Left lung (tissue), 14 donors: ENCODE measurements at regions of chr16 and their contacts with region 1.

Region 1: GRCh38 chr16:84726079-84726668 is 26.4 kb downstream of the USP10 start:
- DNase-seq: peak; percentile 77 to 96 (median 89)
- ATAC-seq: peak; percentile 90
- H3K4me3 ChIP-seq: peak overlapping the region in 1 of 2 donors; percentile 32
- H3K27ac ChIP-seq: peak overlapping the region in 1 of 2 donors; percentile 80
- H3K4me1 ChIP-seq: peaks cover 33 to 77% of the 10 kb centered on the region in 2 donors
- H3K27me3 ChIP-seq: no peaks in the 10 kb centered on the region
- CTCF ChIP-seq: peak; percentile 94 to 96

Region 2: DNA sequence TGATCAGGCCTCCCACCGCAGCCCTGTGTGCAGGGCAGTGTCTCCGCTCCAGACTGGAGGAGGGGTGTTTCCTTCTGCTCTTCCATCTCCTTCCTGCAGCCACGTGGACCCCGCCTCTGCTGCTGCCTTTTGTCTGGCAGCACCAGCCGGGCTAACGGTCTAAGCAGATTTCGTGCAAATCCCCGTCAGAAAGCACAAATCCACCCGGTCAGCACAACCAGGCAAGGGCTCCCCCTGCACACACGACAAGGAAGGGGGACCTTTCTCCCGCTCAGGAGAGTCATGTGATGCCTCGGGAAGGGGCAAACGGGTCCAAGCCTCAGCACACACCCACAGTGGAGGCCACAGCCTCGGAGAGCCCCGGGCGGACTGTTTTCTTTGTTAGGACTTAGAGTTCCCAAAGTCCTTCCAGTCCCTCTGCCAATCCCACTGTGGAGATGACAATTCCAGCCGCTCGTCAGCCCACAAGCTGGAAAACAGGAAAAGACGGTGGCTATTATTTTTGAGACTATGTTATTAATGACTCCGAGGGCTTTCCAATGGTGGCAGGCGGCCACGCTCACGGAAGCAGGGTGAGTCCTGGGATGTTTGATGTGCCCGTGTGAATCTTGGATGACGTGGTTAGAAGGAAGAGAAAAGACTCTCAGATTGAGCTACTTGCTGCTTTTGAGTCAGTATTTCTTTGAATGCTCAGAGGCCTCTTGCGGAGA is 199.2 kb before region 1 on chr16:
- intact Hi-C with region 1: loop called in 1 of 2 experiments (anchors 10 kb)
- DNase-seq: peak in 2 of 4 donors; percentile 40 to 65
- ATAC-seq: peak; percentile 29
- H3K4me3 ChIP-seq: no peak overlapping the region
- H3K27ac ChIP-seq: peak overlapping the region; percentile 53 to 69
- H3K4me1 ChIP-seq: peaks cover 5 to 33% of the 10 kb centered on the region in 2 donors
- H3K27me3 ChIP-seq: no peaks in the 10 kb centered on the region
- CTCF ChIP-seq: no peak

Region 3: DNA sequence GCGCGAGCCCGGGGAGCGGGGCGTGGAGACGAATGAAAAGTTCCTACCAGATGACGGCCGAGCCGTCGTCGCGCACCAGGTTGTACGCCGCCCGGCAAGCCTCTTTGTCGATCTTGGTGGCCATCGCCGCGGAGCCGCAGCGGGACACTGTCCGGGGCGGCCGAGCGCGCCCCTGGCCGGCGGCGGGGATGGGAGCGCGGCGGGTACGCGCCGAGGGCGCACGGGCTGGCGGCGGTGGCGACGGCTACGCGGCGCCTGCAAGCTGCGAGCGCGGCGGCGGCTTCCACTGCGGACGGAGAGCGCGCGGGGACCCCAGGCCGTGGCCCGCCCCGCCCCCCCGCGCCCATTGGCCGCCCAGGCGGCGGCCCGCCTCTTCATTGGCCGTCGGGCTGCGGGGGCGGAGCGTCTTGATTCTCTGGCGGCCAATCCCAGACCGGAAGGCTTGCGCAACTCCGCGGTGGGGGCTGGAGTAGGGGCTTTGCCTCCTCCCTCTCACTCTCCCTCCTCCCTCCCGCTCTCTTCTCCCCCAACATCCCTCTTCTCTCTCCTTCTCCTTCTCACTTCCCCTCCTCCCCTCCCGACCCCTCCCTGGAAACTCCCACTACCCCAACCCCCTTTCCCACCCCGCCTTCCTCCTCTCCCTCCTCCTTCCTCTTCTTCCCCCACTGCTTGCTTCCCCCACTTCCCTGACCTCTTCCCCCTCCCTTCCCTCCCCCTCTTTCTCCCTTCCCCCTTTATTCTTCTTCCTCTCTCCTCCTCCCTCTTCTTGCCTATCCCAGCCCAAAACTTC is 108.2 kb before region 1 on chr16 and contains the start of gene COTL1:
- intact Hi-C with region 1: loop called in 1 of 2 experiments (anchors 5 kb)
- DNase-seq: peak; percentile 95 to 98 (median 97)
- ATAC-seq: peak; percentile 87
- H3K4me3 ChIP-seq: peak within 1 kb of the TSS; percentile 78 to 90
- H3K27ac ChIP-seq: peak within 1 kb of the TSS; percentile 53 to 90
- H3K4me1 ChIP-seq: peaks cover 5 to 64% of the 10 kb centered on the region in 2 donors
- H3K27me3 ChIP-seq: peaks cover 0 to 9% of the 10 kb centered on the region in 2 donors
- CTCF ChIP-seq: no peak
- polyA plus RNA-seq, gene COTL1: 109 to 146 (median 119) TPM

Region 4: GRCh38 chr16:84672276-84673202 is 53.6 kb before region 1 on chr16:
- intact Hi-C with region 1: loop called in 1 of 2 experiments (anchors 10 kb)
- DNase-seq: peak in 3 of 4 donors; percentile 71 to 97 (median 83)
- ATAC-seq: peak; percentile 98
- H3K4me3 ChIP-seq: no peak overlapping the region
- H3K27ac ChIP-seq: no peak overlapping the region
- H3K4me1 ChIP-seq: no peaks in the 10 kb centered on the region
- H3K27me3 ChIP-seq: no peaks in the 10 kb centered on the region
- CTCF ChIP-seq: peak; percentile 92 to 93

Region 5: DNA sequence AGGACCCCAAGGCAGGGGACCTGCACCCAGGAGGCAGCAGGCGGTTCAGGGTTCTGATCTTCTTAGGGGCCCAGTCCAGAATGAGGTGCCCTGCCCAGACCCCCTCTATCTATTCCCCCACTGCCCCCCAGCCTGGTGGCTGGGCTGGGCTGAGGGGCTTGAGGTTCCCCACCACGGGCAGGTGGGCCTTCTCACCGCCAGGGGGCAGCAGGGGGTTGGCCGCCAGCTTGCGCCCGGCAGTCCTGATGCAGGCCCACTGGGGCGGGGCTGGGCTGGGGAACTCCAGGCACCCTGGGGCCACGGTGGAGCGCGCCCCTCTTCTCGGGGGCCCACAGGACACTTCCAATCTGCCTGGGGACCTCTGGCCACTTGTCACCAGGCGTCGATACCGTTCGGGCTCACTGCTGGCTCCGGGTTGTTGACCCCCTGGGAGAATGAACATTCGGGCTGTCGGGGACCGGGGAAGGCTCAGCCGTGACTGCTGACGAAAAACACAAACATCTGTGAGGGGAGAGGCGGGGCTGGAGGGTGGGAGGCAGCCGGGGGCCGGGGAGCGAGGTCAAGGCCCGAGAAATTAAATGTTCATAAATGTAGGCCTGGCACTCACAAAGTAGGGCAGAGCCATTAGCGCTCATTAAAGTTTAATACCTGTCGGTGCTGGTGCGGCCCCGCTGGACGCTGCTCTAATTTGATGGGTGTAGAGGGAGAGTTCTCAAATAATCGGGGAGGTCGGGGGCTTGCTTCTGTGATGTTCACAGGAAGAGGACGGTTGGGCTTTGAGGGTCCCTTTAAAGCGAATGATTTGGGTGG is 667.7 kb after region 1 on chr16:
- intact Hi-C with region 1: no loop called
- DNase-seq: peak in 3 of 4 donors; percentile 49 to 92 (median 78)
- ATAC-seq: peak; percentile 50
- H3K4me3 ChIP-seq: no peak overlapping the region
- H3K27ac ChIP-seq: no peak overlapping the region
- H3K4me1 ChIP-seq: peaks cover 13 to 33% of the 10 kb centered on the region in 2 donors
- H3K27me3 ChIP-seq: peaks cover 0 to 8% of the 10 kb centered on the region in 2 donors
- CTCF ChIP-seq: peak; percentile 82 to 85